ENCODE measurements at regions of chr5 and their contacts with region 1.

Region 1: GRCh38 chr5:160923936-160924710 is 72.1 kb upstream of the ATP10B start:
- DNase-seq: peak; percentile 95 to 97
- H3K4me3 ChIP-seq: no peak overlapping the region
- H3K4me3 Mint-ChIP-seq: peak overlapping the region; percentile 44
- H3K27ac Mint-ChIP-seq: peak overlapping the region; percentile 76
- H3K4me1 ChIP-seq: peaks cover 64% of the 10 kb centered on the region
- H3K4me1 Mint-ChIP-seq: peaks cover 46% of the 10 kb centered on the region
- H3K27me3 ChIP-seq: no peaks in the 10 kb centered on the region
- H3K27me3 Mint-ChIP-seq: no peaks in the 10 kb centered on the region
- CTCF ChIP-seq: no peak

Region 2: GRCh38 chr5:160685695-160686094 is 238.4 kb before region 1 on chr5:
- CTCF ChIA-PET with region 1: no interaction called
- POLR2A ChIA-PET with region 1: no interaction called
- intact Hi-C with region 1: loop called (anchors 5 kb)
- DNase-seq: peak in 1 of 2 experiments; percentile 66
- H3K4me3 ChIP-seq: no peak overlapping the region
- H3K4me3 Mint-ChIP-seq: no peak overlapping the region
- H3K27ac Mint-ChIP-seq: no peak overlapping the region
- H3K4me1 ChIP-seq: no peaks in the 10 kb centered on the region
- H3K4me1 Mint-ChIP-seq: peaks cover 8% of the 10 kb centered on the region
- H3K27me3 ChIP-seq: no peaks in the 10 kb centered on the region
- H3K27me3 Mint-ChIP-seq: no peaks in the 10 kb centered on the region
- CTCF ChIP-seq: peak; percentile 76 to 79

Region 3: GRCh38 chr5:160802592-160802991 is 121.5 kb before region 1 on chr5:
- CTCF ChIA-PET with region 1: no interaction called
- POLR2A ChIA-PET with region 1: no interaction called
- intact Hi-C with region 1: loop called (anchors 2 kb)
- DNase-seq: peak; percentile 38 to 44
- H3K4me3 ChIP-seq: no peak overlapping the region
- H3K4me3 Mint-ChIP-seq: no peak overlapping the region
- H3K27ac Mint-ChIP-seq: no peak overlapping the region
- H3K4me1 ChIP-seq: 0 out of 2 replicates have a peak, but pooled peaks cover 10% of the 10 kb centered on the region
- H3K4me1 Mint-ChIP-seq: peaks cover 10% of the 10 kb centered on the region
- H3K27me3 ChIP-seq: no peaks in the 10 kb centered on the region
- H3K27me3 Mint-ChIP-seq: no peaks in the 10 kb centered on the region
- CTCF ChIP-seq: peak; percentile 22 to 41

Region 4: DNA sequence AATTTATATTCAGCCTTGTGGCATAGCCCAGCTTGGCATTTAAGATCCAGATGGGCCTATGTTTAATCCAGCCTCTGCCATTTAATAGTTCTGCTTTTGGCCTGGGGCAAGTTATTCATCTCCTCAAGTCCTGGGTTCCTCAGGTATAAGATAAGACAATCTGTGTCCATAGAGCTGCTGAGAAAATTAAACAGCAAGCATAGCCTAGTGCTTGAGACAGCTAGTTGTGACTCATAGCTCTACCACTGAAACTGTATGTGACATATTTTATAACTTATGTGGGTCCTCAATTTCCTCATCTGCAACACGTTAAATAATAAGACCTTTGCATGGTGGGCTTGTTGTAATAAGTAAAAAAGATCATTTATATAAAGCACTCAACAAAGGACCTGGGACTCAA is 18.8 kb before region 1 on chr5:
- CTCF ChIA-PET with region 1: no interaction called
- POLR2A ChIA-PET with region 1: no interaction called
- intact Hi-C with region 1: loop called (anchors 1 kb)
- DNase-seq: no peak
- H3K4me3 ChIP-seq: no peak overlapping the region
- H3K4me3 Mint-ChIP-seq: no peak overlapping the region
- H3K27ac Mint-ChIP-seq: no peak overlapping the region
- H3K4me1 ChIP-seq: peaks cover 60% of the 10 kb centered on the region
- H3K4me1 Mint-ChIP-seq: peaks cover 52% of the 10 kb centered on the region
- H3K27me3 ChIP-seq: no peaks in the 10 kb centered on the region
- H3K27me3 Mint-ChIP-seq: no peaks in the 10 kb centered on the region
- CTCF ChIP-seq: no peak

Region 5: GRCh38 chr5:160959804-160960203 is 35.7 kb after region 1 on chr5:
- CTCF ChIA-PET with region 1: no interaction called
- POLR2A ChIA-PET with region 1: no interaction called
- intact Hi-C with region 1: loop called (anchors 2 kb)
- DNase-seq: no peak
- H3K4me3 ChIP-seq: no peak overlapping the region
- H3K4me3 Mint-ChIP-seq: no peak overlapping the region
- H3K27ac Mint-ChIP-seq: no peak overlapping the region
- H3K4me1 ChIP-seq: peaks cover 6% of the 10 kb centered on the region
- H3K4me1 Mint-ChIP-seq: peaks cover 5% of the 10 kb centered on the region
- H3K27me3 ChIP-seq: no peaks in the 10 kb centered on the region
- H3K27me3 Mint-ChIP-seq: no peaks in the 10 kb centered on the region
- CTCF ChIP-seq: no peak

Measured in Caco-2 (cell line).